ENCODE measurements at regions of chr20 and their contacts with region 1.

Region 1: GRCh38 chr20:33731693-33732165 is at the start of gene ZNF341:
- DNase-seq: peak; percentile 76
- ATAC-seq: peak; percentile 84
- H3K4me3 ChIP-seq: peak within 1 kb of the TSS; percentile 43
- H3K27ac ChIP-seq: peak within 1 kb of the TSS; percentile 81
- H3K4me1 ChIP-seq: peaks cover 18% of the 10 kb centered on the region
- H3K27me3 ChIP-seq: no peaks in the 10 kb centered on the region; the same call in 1 of the 2 replicates
- CTCF ChIP-seq: peak; percentile 87
- POLR2A ChIP-seq: no peak
- RAD21 ChIP-seq: peak; percentile 69
- total RNA-seq, gene ZNF341: 1.1 TPM in 2 replicates

Region 2: DNA sequence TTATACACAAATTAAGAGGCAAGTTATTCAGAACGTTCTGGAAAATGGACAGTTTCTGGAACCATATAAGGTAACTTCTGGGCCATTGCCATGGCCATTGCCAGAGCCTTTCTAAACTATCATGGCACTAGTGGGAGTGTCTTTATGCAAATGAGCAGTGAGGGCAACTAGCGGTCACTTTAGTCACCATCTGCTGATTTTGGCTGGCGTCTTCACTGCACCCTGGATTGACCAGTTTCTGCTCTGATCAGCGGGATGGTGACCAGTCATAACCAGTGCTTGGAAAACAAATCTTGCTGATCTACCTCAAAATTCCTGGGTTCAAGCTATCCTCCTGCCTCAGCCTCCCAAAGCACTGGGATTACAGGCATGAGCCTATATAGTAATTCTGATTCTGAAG is 280.9 kb before region 1 on chr20:
- CTCF ChIA-PET with region 1: no interaction called
- POLR2A ChIA-PET with region 1: no interaction called
- dilution Hi-C with region 1: no loop called
- in situ Hi-C with region 1: no loop called
- intact Hi-C with region 1: loop called (anchors 2 kb)
- DNase-seq: peak; percentile 40
- ATAC-seq: peak; percentile 56
- H3K4me3 ChIP-seq: no peak overlapping the region
- H3K27ac ChIP-seq: no peak overlapping the region
- H3K4me1 ChIP-seq: no peaks in the 10 kb centered on the region
- H3K27me3 ChIP-seq: no peaks in the 10 kb centered on the region
- CTCF ChIP-seq: no peak
- POLR2A ChIP-seq: no peak
- RAD21 ChIP-seq: no peak

Region 3: GRCh38 chr20:33666293-33667244 is 65.2 kb before region 1 on chr20 and contains the start of gene ACTL10:
- CTCF ChIA-PET with region 1: interaction called, 3 read pairs
- POLR2A ChIA-PET with region 1: no interaction called
- dilution Hi-C with region 1: no loop called
- in situ Hi-C with region 1: no loop called
- intact Hi-C with region 1: loop called (anchors 5 kb)
- DNase-seq: peak; percentile 96
- ATAC-seq: peak; percentile 77
- H3K4me3 ChIP-seq: peak within 1 kb of the TSS; percentile 29
- H3K27ac ChIP-seq: peak within 1 kb of the TSS; percentile 63
- H3K4me1 ChIP-seq: peaks cover 19% of the 10 kb centered on the region
- H3K27me3 ChIP-seq: no peaks in the 10 kb centered on the region
- CTCF ChIP-seq: peak; percentile 53
- POLR2A ChIP-seq: no peak
- RAD21 ChIP-seq: peak; percentile 31
- total RNA-seq, gene ACTL10: 0.18 and 0.28 TPM in 2 replicates

Region 4: GRCh38 chr20:33791959-33792597 is 60.3 kb after region 1 on chr20:
- CTCF ChIA-PET with region 1: no interaction called
- POLR2A ChIA-PET with region 1: interaction called, 11 read pairs
- dilution Hi-C with region 1: no loop called
- in situ Hi-C with region 1: no loop called
- intact Hi-C with region 1: no loop called
- DNase-seq: peak; percentile 37
- ATAC-seq: peak; percentile 60
- H3K4me3 ChIP-seq: no peak overlapping the region
- H3K27ac ChIP-seq: no peak overlapping the region
- H3K4me1 ChIP-seq: peaks cover 10% of the 10 kb centered on the region
- H3K27me3 ChIP-seq: no peaks in the 10 kb centered on the region
- CTCF ChIP-seq: peak; percentile 66
- POLR2A ChIP-seq: no peak
- RAD21 ChIP-seq: peak; percentile 68

Region 5: GRCh38 chr20:33810885-33811777 is 79.4 kb after region 1 on chr20 and contains the start of gene CHMP4B:
- CTCF ChIA-PET with region 1: interaction called, 3 read pairs
- POLR2A ChIA-PET with region 1: no interaction called
- dilution Hi-C with region 1: no loop called
- in situ Hi-C with region 1: no loop called
- intact Hi-C with region 1: loop called (anchors 5 kb)
- DNase-seq: peak; percentile 98
- ATAC-seq: peak; percentile 97
- H3K4me3 ChIP-seq: peak within 1 kb of the TSS; percentile 90
- H3K27ac ChIP-seq: peak within 1 kb of the TSS; percentile 98
- H3K4me1 ChIP-seq: peaks cover 7% of the 10 kb centered on the region
- H3K27me3 ChIP-seq: no peaks in the 10 kb centered on the region
- CTCF ChIP-seq: no peak
- POLR2A ChIP-seq: peak; percentile 89
- RAD21 ChIP-seq: no peak
- total RNA-seq, gene CHMP4B: 30.3 and 40.5 TPM in 2 replicates

Measured in IMR-90 (cell line).